Activated B cell treated with CpG ODN at 0.5 μM for 24 hours (primary cell): ENCODE measurements at regions of chr5 and their contacts with region 1.

Region 1: DNA sequence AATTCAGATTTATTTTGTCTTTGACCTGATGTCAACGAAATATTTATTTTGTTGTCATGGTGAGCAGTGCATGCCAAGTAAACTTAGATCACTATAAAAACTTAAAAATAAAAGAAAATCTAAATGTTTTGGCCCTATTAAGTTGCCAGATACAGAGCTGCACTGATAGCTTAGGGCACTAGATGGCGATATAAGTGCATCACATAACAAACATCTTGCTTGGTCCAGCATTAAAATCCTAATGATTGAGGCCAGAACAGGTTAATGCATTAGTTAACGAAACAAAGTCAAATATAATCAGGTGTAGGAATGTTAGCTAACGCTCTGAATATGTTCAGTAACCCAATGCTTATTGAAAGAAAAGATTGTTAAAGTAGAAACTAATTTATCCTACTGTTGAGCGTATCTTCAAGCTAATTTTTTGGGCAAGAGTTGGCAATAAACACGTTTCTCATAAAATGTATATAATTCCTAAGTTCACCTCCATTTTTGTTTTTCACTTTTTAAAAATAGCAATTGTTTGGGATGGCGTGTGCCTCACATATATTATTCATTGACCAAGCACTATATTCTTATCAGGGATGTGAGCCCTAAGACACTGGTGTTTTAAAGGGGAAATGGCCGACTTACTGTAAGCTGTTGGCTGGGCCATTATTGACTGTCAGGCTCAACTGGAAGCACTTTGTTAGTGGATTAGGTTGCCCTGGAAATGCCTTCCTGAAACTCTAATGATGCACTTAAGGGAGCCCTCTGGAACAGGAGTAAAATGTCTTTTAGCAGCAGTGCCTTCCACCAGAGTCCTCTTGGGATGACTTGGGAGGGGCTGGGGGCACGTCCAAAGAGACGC is 33.3 kb downstream of the KCTD16 start:
- DNase-seq: no peak
- ATAC-seq: peak; percentile 65
- H3K4me3 Mint-ChIP-seq: no peak overlapping the region
- H3K27ac Mint-ChIP-seq: no peak overlapping the region
- H3K4me1 Mint-ChIP-seq: no peaks in the 10 kb centered on the region
- H3K27me3 Mint-ChIP-seq: peaks cover 51% of the 10 kb centered on the region
- CTCF ChIP-seq: peak; percentile 83

Region 2: DNA sequence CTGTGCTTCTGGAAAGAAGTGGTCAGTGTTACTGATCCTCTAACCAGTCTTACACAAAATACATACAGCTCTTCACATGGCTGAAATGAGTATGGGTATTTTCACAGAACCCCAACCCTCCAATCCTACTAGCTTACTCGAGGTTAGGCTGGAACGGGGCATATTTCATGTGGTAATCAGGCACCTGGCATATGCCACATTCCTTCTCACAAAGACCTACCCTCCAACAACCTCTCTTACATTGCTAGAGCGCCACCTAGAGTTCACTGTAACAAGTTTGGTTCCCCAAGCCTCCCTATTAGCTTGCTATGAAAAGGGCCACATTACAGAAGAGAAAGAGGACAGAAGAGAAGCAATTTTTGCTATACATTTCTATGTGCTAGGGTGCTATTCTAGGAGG is 1033.9 kb after region 1 on chr5:
- CTCF ChIA-PET with region 1: no interaction called
- POLR2A ChIA-PET with region 1: no interaction called
- intact Hi-C with region 1: loop called (anchors 5 kb)
- DNase-seq: no peak
- ATAC-seq: no peak
- H3K4me3 Mint-ChIP-seq: no peak overlapping the region
- H3K27ac Mint-ChIP-seq: no peak overlapping the region
- H3K4me1 Mint-ChIP-seq: no peaks in the 10 kb centered on the region
- H3K27me3 Mint-ChIP-seq: no peaks in the 10 kb centered on the region
- CTCF ChIP-seq: no peak

Region 3: DNA sequence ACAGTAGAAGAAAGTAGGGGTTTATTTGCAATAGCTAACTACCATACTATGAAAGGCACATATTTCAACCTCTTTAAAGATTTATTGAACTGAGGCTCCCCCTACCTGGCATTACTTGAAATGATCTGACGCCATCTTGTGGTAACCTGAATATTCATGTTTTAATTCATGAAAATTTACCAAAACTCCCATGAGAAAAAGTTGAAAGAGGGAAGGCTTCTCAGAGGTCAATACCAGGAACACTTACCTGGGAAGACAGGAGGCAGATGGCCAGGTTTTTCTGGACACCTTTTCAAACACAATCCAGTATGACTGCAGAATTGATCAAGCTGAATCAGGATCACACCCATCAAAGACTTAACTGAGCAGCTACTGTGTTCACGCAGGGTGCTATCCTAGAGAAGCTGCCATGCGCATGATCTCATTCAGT is 1621.8 kb after region 1 on chr5:
- CTCF ChIA-PET with region 1: interaction called, 23 read pairs
- POLR2A ChIA-PET with region 1: no interaction called
- intact Hi-C with region 1: loop called (anchors 1 kb)
- DNase-seq: no peak
- ATAC-seq: peak; percentile 31
- H3K4me3 Mint-ChIP-seq: no peak overlapping the region
- H3K27ac Mint-ChIP-seq: no peak overlapping the region
- H3K4me1 Mint-ChIP-seq: no peaks in the 10 kb centered on the region
- H3K27me3 Mint-ChIP-seq: no peaks in the 10 kb centered on the region
- CTCF ChIP-seq: peak; percentile 58

Region 4: DNA sequence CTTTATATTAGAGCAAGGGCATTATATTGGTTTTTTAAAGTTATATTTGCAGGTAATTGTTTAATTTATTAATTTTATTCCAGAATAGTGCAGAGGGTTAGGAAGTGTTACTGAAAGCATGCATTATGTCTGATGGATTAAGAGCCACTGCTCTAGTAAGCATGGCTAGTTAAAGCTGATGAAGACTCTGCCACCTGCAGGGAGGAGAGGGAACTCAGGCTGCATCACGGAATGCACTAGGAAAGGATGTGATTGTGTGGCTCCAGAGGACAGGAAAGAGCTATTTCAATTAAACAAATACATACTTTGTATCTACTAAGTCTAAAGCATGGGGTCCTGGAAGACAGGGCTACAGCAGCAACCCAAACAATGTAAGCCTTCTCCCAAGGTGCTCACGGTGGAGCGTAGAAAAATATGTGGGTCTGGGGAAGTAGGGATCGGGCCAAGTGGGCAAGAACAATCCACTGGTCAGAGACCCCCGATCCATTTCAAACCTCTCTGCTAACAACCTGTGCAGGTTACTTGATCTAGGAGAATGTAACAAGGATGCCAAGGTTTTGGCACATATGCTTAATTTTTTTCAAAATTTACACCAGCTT is 1684.1 kb after region 1 on chr5:
- CTCF ChIA-PET with region 1: interaction called, 3 read pairs
- POLR2A ChIA-PET with region 1: no interaction called
- intact Hi-C with region 1: loop called (anchors 10 kb)
- DNase-seq: no peak
- ATAC-seq: no peak
- H3K4me3 Mint-ChIP-seq: no peak overlapping the region
- H3K27ac Mint-ChIP-seq: no peak overlapping the region
- H3K4me1 Mint-ChIP-seq: no peaks in the 10 kb centered on the region
- H3K27me3 Mint-ChIP-seq: no peaks in the 10 kb centered on the region
- CTCF ChIP-seq: no peak

Region 5: GRCh38 chr5:146130440-146131045 is 1926.6 kb after region 1 on chr5:
- CTCF ChIA-PET with region 1: interaction called, 12 read pairs
- POLR2A ChIA-PET with region 1: no interaction called
- intact Hi-C with region 1: loop called (anchors 1 kb)
- DNase-seq: no peak
- ATAC-seq: no peak
- H3K4me3 Mint-ChIP-seq: no peak overlapping the region
- H3K27ac Mint-ChIP-seq: no peak overlapping the region
- H3K4me1 Mint-ChIP-seq: no peaks in the 10 kb centered on the region
- H3K27me3 Mint-ChIP-seq: no peaks in the 10 kb centered on the region
- CTCF ChIP-seq: no peak